ENCODE measurements at regions of chr11 and their contacts with region 1.

Region 1: GRCh38 chr11:117098269-117099232 is at the start of gene SIK3:
- DNase-seq: peak; percentile 89
- H3K4me3 Mint-ChIP-seq: peak within 1 kb of the TSS; percentile 85
- H3K27ac Mint-ChIP-seq: peak within 1 kb of the TSS; percentile 100
- H3K4me1 Mint-ChIP-seq: peaks cover 44% of the 10 kb centered on the region
- H3K27me3 Mint-ChIP-seq: no peaks in the 10 kb centered on the region
- CTCF ChIP-seq: peak; percentile 44
- total RNA-seq, gene SIK3: 33.3 and 36.5 TPM in 2 replicates

Region 2: DNA sequence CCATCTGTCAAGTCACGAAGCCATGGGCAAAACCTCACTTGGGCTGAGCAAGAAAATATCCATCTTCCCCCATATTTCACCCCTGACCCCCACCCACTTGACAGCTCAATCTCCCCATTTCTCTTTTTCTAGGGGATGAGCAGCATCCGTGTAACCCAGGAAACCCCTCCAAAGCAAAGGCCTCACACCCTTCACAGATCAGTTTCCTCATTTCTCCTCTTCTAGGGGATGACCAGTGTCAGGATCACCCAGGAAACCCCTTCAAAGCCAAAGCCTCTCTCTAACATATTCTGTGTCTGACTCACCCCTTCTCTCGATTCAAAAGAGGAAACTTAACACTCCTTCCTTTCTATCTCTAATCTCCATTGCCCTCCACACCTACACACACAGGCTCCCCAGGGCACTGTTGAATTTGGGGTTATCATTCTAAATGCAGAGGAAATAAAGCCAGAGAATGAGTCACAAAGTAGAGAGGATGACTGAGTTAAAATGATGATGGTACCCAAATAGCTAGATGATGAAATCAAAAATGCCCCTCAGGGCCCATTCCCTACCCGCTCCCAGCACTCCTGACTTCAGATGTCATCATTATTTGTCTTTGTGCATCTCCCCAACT is 765.4 kb before region 1 on chr11:
- CTCF ChIA-PET with region 1: no interaction called
- POLR2A ChIA-PET with region 1: no interaction called
- intact Hi-C with region 1: no loop called
- DNase-seq: no peak
- H3K4me3 Mint-ChIP-seq: no peak overlapping the region
- H3K27ac Mint-ChIP-seq: no peak overlapping the region
- H3K4me1 Mint-ChIP-seq: no peaks in the 10 kb centered on the region
- H3K27me3 Mint-ChIP-seq: no peaks in the 10 kb centered on the region
- CTCF ChIP-seq: no peak

Region 3: GRCh38 chr11:116879800-116880625 is 218.5 kb before region 1 on chr11:
- CTCF ChIA-PET with region 1: interaction called, 232 read pairs
- POLR2A ChIA-PET with region 1: interaction called, 5 read pairs
- intact Hi-C with region 1: loop called (anchors 2 kb)
- DNase-seq: peak; percentile 74
- H3K4me3 Mint-ChIP-seq: no peak overlapping the region
- H3K27ac Mint-ChIP-seq: no peak overlapping the region
- H3K4me1 Mint-ChIP-seq: no peaks in the 10 kb centered on the region
- H3K27me3 Mint-ChIP-seq: no peaks in the 10 kb centered on the region
- CTCF ChIP-seq: peak; percentile 60

Region 4: GRCh38 chr11:116932181-116932580 is 166.4 kb before region 1 on chr11:
- CTCF ChIA-PET with region 1: no interaction called
- POLR2A ChIA-PET with region 1: no interaction called
- intact Hi-C with region 1: no loop called
- DNase-seq: no peak
- H3K4me3 Mint-ChIP-seq: no peak overlapping the region
- H3K27ac Mint-ChIP-seq: peak overlapping the region; percentile 5
- H3K4me1 Mint-ChIP-seq: peaks cover 12% of the 10 kb centered on the region
- H3K27me3 Mint-ChIP-seq: no peaks in the 10 kb centered on the region
- CTCF ChIP-seq: no peak

Region 5: GRCh38 chr11:116986521-116987105 is 111.9 kb before region 1 on chr11:
- CTCF ChIA-PET with region 1: interaction called, 3 read pairs
- POLR2A ChIA-PET with region 1: interaction called, 7 read pairs
- intact Hi-C with region 1: loop called (anchors 10 kb)
- DNase-seq: peak; percentile 78
- H3K4me3 Mint-ChIP-seq: peak overlapping the region; percentile 60
- H3K27ac Mint-ChIP-seq: peak overlapping the region; percentile 32
- H3K4me1 Mint-ChIP-seq: peaks cover 43% of the 10 kb centered on the region
- H3K27me3 Mint-ChIP-seq: no peaks in the 10 kb centered on the region
- CTCF ChIP-seq: no peak

Region 6: GRCh38 chr11:117039900-117040299 is 58.7 kb before region 1 on chr11:
- CTCF ChIA-PET with region 1: interaction called, 3 read pairs
- POLR2A ChIA-PET with region 1: interaction called, 11 read pairs
- intact Hi-C with region 1: no loop called
- DNase-seq: peak; percentile 53
- H3K4me3 Mint-ChIP-seq: no peak overlapping the region
- H3K27ac Mint-ChIP-seq: peak overlapping the region; percentile 46
- H3K4me1 Mint-ChIP-seq: peaks cover 33% of the 10 kb centered on the region
- H3K27me3 Mint-ChIP-seq: no peaks in the 10 kb centered on the region
- CTCF ChIP-seq: no peak

Region 7: DNA sequence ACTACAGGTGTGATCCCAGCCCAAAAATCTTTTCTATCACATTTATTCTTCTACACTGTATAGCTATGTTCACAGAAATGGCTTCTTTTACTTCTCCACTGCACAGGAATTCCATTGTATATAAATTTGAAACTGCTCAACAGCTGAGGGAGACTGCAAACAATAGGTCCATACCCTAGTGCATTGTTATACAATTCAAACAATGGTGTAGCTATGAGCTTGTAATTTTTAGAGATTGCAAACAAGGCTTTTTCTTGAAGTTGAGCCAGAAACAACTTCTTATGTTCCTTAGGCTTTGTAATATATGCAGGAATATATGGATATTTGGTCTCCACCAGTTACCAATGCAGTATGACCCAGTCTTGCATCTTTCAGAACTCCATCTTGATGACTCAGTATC is 19.1 kb after region 1 on chr11:
- CTCF ChIA-PET with region 1: interaction called, 43 read pairs
- POLR2A ChIA-PET with region 1: interaction called, 3 read pairs
- intact Hi-C with region 1: no loop called
- DNase-seq: no peak
- H3K4me3 Mint-ChIP-seq: no peak overlapping the region
- H3K27ac Mint-ChIP-seq: no peak overlapping the region
- H3K4me1 Mint-ChIP-seq: no peaks in the 10 kb centered on the region
- H3K27me3 Mint-ChIP-seq: no peaks in the 10 kb centered on the region
- CTCF ChIP-seq: no peak